ENCODE measurements at regions of chr1 and their contacts with region 1.

Region 1: DNA sequence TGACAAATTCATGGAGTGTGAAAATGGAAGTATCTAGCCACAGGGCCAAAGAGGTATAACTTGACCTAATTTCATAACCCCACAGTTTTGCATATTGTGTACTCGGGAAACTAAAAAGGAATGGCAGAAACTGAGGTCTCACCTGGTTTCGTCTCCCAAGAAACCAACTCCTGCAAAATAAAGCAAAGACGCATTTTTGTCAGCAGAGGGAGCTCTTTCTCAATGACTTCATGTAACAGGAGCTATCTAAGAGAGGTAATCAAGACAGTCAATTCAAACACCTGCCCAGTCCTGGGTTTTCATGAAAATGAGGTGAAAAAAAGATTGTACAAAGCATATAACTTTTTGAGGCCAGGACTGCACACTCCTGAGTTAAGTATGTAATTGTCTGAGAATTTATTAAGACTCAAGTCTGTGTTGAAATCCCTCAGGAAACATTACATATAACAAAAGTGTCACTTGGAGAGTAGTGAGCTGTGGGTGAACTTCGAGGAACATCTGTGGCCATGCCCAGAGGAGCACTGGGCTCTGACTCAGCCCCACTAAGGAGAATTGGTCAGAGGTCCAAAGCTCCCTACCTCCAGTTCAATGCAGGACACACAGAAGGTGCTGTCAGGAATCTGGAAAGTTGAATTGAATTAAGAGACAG is 17.6 kb downstream of the FCRL4 start:
- DNase-seq: peak in 1 of 2 donors; percentile 72
- ATAC-seq: peak in 2 of 3 donors; percentile 63
- H3K4me3 ChIP-seq: no peak overlapping the region
- H3K4me3 Mint-ChIP-seq: no peak overlapping the region
- H3K27ac ChIP-seq: no peak overlapping the region
- H3K27ac Mint-ChIP-seq: peak overlapping the region in 1 of 2 donors; percentile 32
- H3K4me1 ChIP-seq: peaks cover 9% of the 10 kb centered on the region
- H3K4me1 Mint-ChIP-seq: peaks cover 5 to 11% of the 10 kb centered on the region in 2 donors
- H3K27me3 ChIP-seq: peaks cover 2% of the 10 kb centered on the region
- H3K27me3 Mint-ChIP-seq: peaks cover 1 to 4% of the 10 kb centered on the region in 2 donors
- CTCF ChIP-seq: peak; percentile 90

Region 2: GRCh38 chr1:157691285-157691920 is 111.1 kb after region 1 on chr1:
- intact Hi-C with region 1: loop called (anchors 1 kb)
- DNase-seq: peak in 1 of 2 donors; percentile 25
- ATAC-seq: peak in 2 of 3 donors; percentile 40 to 65
- H3K4me3 ChIP-seq: no peak overlapping the region
- H3K4me3 Mint-ChIP-seq: peak overlapping the region; percentile 13
- H3K27ac ChIP-seq: no peak overlapping the region
- H3K27ac Mint-ChIP-seq: peak overlapping the region; percentile 63 to 65
- H3K4me1 ChIP-seq: peaks cover 25% of the 10 kb centered on the region
- H3K4me1 Mint-ChIP-seq: peaks cover 77 to 81% of the 10 kb centered on the region in 2 donors
- H3K27me3 ChIP-seq: no peaks in the 10 kb centered on the region
- H3K27me3 Mint-ChIP-seq: no peaks in the 10 kb centered on the region
- CTCF ChIP-seq: peak; percentile 41

Region 3: GRCh38 chr1:157773493-157774350 is 193.4 kb after region 1 on chr1:
- intact Hi-C with region 1: loop called (anchors 1 kb)
- DNase-seq: peak in 1 of 2 donors; percentile 53
- ATAC-seq: peak; percentile 76 to 97 (median 93)
- H3K4me3 ChIP-seq: no peak overlapping the region
- H3K4me3 Mint-ChIP-seq: no peak overlapping the region
- H3K27ac ChIP-seq: no peak overlapping the region
- H3K27ac Mint-ChIP-seq: peak overlapping the region in 1 of 2 donors; percentile 63
- H3K4me1 ChIP-seq: peaks cover 35% of the 10 kb centered on the region
- H3K4me1 Mint-ChIP-seq: peaks cover 39 to 46% of the 10 kb centered on the region in 2 donors
- H3K27me3 ChIP-seq: no peaks in the 10 kb centered on the region
- H3K27me3 Mint-ChIP-seq: no peaks in the 10 kb centered on the region
- CTCF ChIP-seq: peak; percentile 76

Region 4: GRCh38 chr1:157948312-157949073 is 368.2 kb after region 1 on chr1:
- intact Hi-C with region 1: loop called (anchors 1 kb)
- DNase-seq: no peak
- ATAC-seq: no peak
- H3K4me3 ChIP-seq: no peak overlapping the region
- H3K4me3 Mint-ChIP-seq: no peak overlapping the region
- H3K27ac ChIP-seq: no peak overlapping the region
- H3K27ac Mint-ChIP-seq: no peak overlapping the region
- H3K4me1 ChIP-seq: no peaks in the 10 kb centered on the region
- H3K4me1 Mint-ChIP-seq: peaks cover 11 to 17% of the 10 kb centered on the region in 2 donors
- H3K27me3 ChIP-seq: no peaks in the 10 kb centered on the region
- H3K27me3 Mint-ChIP-seq: peaks cover 10 to 24% of the 10 kb centered on the region in 2 donors
- CTCF ChIP-seq: no peak

Measured in natural killer cell (primary cell).